ENCODE measurements at regions of chr11 and their contacts with region 1.

Region 1: GRCh38 chr11:117843666-117844484 is 19.3 kb upstream of the FXYD2 start:
- DNase-seq: peak; percentile 59
- ATAC-seq: peak; percentile 97
- H3K4me3 ChIP-seq: no peak overlapping the region
- H3K27ac ChIP-seq: no peak overlapping the region
- H3K4me1 ChIP-seq: no peaks in the 10 kb centered on the region
- H3K27me3 ChIP-seq: peaks cover 8% of the 10 kb centered on the region; the same call in 1 of the 2 replicates
- CTCF ChIP-seq: peak; percentile 91
- POLR2A ChIP-seq: no peak
- RAD21 ChIP-seq: peak; percentile 73

Region 2: DNA sequence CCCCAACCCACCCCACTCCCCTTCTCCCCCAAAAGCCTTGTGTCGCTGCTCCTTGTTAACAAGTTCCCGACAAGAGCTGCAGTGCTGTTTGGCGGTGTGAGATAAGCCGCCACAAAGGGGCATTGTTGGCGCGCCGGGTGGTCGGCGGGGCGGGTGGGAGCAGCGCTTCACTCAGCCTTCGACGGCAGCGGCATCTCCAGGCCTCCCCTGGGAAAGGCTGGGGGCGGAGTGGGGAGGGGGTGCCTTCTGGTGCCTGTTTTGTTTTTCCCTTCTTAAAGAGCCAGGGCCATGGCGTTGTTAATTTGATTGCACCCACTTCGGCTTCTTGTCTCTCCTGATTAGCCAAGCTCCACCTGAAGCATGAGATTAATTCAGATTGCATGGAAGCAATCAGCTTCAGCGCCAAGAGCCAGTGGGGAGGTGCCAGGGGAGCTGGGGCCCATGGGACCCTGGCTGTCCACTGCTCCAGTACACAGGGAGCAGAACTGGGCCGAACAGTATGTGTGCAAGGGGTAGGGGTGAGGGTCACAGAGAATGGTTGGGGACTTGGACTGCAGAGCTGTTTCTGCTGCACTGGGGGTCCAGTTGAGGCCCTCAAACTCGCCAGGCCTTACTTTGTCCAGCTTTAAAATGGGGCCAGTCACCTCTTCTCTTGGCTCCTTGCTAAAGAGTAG is 351.2 kb before region 1 on chr11:
- CTCF ChIA-PET with region 1: no interaction called
- POLR2A ChIA-PET with region 1: no interaction called
- dilution Hi-C with region 1: no loop called
- in situ Hi-C with region 1: no loop called
- intact Hi-C with region 1: no loop called
- DNase-seq: no peak
- ATAC-seq: no peak
- H3K4me3 ChIP-seq: no peak overlapping the region
- H3K27ac ChIP-seq: no peak overlapping the region
- H3K4me1 ChIP-seq: no peaks in the 10 kb centered on the region
- H3K27me3 ChIP-seq: peaks cover 44% of the 10 kb centered on the region
- CTCF ChIP-seq: no peak
- POLR2A ChIP-seq: no peak
- RAD21 ChIP-seq: no peak

Region 3: GRCh38 chr11:117946842-117947526 is 103.1 kb after region 1 on chr11:
- CTCF ChIA-PET with region 1: interaction called, 14 read pairs
- POLR2A ChIA-PET with region 1: no interaction called
- dilution Hi-C with region 1: no loop called
- in situ Hi-C with region 1: loop called (anchors 5 kb)
- intact Hi-C with region 1: loop called (anchors 1 kb)
- DNase-seq: peak; percentile 91
- ATAC-seq: peak; percentile 97
- H3K4me3 ChIP-seq: no peak overlapping the region
- H3K27ac ChIP-seq: no peak overlapping the region
- H3K4me1 ChIP-seq: no peaks in the 10 kb centered on the region
- H3K27me3 ChIP-seq: peaks cover 7% of the 10 kb centered on the region; the same call in 1 of the 2 replicates
- CTCF ChIP-seq: peak; percentile 98
- POLR2A ChIP-seq: peak; percentile 54; the same call in 1 of the 2 replicates
- RAD21 ChIP-seq: peak; percentile 99

Region 4: GRCh38 chr11:118052581-118053206 is 208.8 kb after region 1 on chr11:
- CTCF ChIA-PET with region 1: no interaction called
- POLR2A ChIA-PET with region 1: no interaction called
- dilution Hi-C with region 1: no loop called
- in situ Hi-C with region 1: no loop called
- intact Hi-C with region 1: loop called (anchors 1 kb)
- DNase-seq: no peak
- ATAC-seq: no peak
- H3K4me3 ChIP-seq: no peak overlapping the region
- H3K27ac ChIP-seq: no peak overlapping the region
- H3K4me1 ChIP-seq: no peaks in the 10 kb centered on the region
- H3K27me3 ChIP-seq: peaks cover 10% of the 10 kb centered on the region; the same call in 1 of the 2 replicates
- CTCF ChIP-seq: no peak
- POLR2A ChIP-seq: no peak
- RAD21 ChIP-seq: no peak

Measured in IMR-90 (cell line).